Endothelial cell of umbilical vein (primary cell): ENCODE measurements at regions of chr2 and their contacts with region 1.

Region 1: DNA sequence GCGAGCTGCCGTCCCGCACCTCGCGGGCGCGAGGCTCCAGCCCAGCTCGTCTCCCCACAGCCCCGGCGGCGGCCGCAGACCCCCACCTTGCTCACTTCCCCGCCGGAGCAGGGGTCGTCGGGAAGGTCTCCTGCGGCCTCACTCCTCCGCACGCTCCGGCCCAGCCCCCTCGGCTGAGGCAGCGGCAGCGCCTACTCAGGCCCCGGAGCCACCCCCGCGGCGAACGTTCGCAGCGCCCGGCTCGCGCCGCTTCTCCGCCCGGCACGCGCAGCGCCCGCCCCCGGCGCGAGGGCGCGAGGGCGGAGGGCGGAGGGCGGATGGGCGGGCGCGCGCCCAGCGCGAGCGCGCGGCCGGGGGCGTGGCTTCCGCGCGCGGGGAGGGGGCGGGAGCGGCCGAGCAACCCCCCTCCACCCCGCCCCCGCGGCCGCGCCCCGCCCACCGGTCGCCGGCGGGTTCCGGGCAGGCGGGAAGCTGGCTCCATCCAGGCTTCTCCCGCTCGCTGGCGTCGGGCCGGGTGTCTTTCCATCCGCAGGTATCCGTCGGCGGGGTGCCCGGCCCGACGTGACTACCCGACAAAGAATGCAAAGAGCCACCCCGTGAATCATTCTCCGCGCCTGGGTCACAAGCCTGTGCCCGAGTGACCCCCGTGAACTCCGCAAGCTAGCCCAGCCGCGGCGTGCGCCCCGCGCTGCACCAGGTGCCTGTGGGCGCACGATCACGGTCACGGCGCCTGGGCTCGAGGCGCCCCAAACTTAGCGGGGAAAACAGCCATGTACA is at the start of gene DTNB:
- DNase-seq: peak; percentile 64
- H3K4me3 ChIP-seq: peak within 1 kb of the TSS; percentile 23 to 92 (median 66)
- H3K27ac ChIP-seq: no peak within 1 kb of the TSS
- H3K4me1 ChIP-seq: peaks cover 7% of the 10 kb centered on the region
- H3K27me3 ChIP-seq: peaks cover 0 to 4% of the 10 kb centered on the region in 2 experiments
- CTCF ChIP-seq: no peak
- POLR2A ChIP-seq: peak; percentile 66
- total RNA-seq, gene DTNB: 13.9 and 17.0 TPM in 2 replicates

Region 2: GRCh38 chr2:26479131-26479788 is 805.8 kb after region 1 on chr2:
- CTCF ChIA-PET with region 1: no interaction called
- POLR2A ChIA-PET with region 1: interaction called, 12 read pairs
- dilution Hi-C with region 1: no loop called
- intact Hi-C with region 1: no loop called
- DNase-seq: no peak
- H3K4me3 ChIP-seq: no peak overlapping the region
- H3K27ac ChIP-seq: no peak overlapping the region
- H3K4me1 ChIP-seq: no peaks in the 10 kb centered on the region
- H3K27me3 ChIP-seq: no peaks in the 10 kb centered on the region
- CTCF ChIP-seq: no peak
- POLR2A ChIP-seq: no peak